T-cell (primary cell): ENCODE measurements at regions of chr19 and their contacts with region 1.

Region 1: DNA sequence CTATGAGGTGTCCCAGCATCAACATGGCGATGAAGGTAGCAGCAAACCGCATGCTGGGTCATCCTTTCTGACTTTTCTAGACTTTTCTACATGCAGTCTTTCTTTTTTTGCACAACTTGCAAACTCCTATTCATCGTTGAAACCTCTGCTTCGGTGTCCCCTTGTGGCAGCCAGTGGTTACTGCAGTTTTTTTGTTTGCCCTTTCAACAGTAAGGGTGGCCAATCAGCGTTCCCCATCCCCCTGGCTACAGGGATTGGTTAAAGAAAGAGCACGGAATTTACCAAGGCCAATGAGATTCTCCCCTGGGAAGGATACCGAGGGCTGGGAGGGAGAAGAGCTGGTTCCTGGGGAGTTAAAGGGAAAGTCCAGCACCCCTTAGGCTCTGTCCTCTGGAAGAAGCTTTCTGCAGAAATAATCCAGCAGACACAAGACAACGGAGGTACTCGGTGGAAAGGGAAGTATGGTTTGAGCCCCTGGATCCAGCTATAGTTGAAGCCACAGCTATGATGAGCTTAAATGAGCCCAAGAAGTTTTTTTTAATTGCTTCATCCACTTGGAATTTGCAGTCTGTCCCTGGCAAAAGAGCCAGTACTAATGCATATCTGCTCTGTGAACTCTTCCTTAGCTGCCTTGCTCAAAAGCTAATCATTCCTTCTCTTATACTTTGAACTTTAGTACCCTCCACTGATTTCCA is 5.6 kb upstream of the LSM4 start:
- DNase-seq: peak; percentile 66 to 92 (median 83)
- ATAC-seq: peak; percentile 99
- H3K4me3 ChIP-seq: peak overlapping the region; percentile 36 to 49
- H3K4me3 Mint-ChIP-seq: peak overlapping the region; percentile 15 to 59 (median 55)
- H3K27ac ChIP-seq: peak overlapping the region; percentile 16
- H3K27ac Mint-ChIP-seq: peak overlapping the region; percentile 3 to 68
- H3K4me1 ChIP-seq: peaks cover 14 to 21% of the 10 kb centered on the region in 2 experiments
- H3K4me1 Mint-ChIP-seq: peaks cover 18 to 19% (median 18%) of the 10 kb centered on the region in 3 donors
- H3K27me3 ChIP-seq: peaks cover 0 to 12% of the 10 kb centered on the region in 2 experiments
- H3K27me3 Mint-ChIP-seq: no peaks in the 10 kb centered on the region

Region 2: GRCh38 chr19:18251587-18252369 is 76.7 kb before region 1 on chr19:
- CTCF ChIA-PET with region 1: interaction called, 6 to 10 read pairs
- POLR2A ChIA-PET with region 1: no interaction called
- DNase-seq: peak; percentile 41 to 90 (median 74)
- ATAC-seq: peak; percentile 72 to 86 (median 83)
- H3K4me3 ChIP-seq: no peak overlapping the region
- H3K4me3 Mint-ChIP-seq: no peak overlapping the region
- H3K27ac ChIP-seq: no peak overlapping the region
- H3K27ac Mint-ChIP-seq: no peak overlapping the region
- H3K4me1 ChIP-seq: peaks cover 0 to 5% of the 10 kb centered on the region in 2 experiments
- H3K4me1 Mint-ChIP-seq: peaks cover 3 to 13% (median 4%) of the 10 kb centered on the region in 3 donors
- H3K27me3 ChIP-seq: peaks cover 0 to 57% of the 10 kb centered on the region in 2 experiments
- H3K27me3 Mint-ChIP-seq: peaks cover 26 to 30% of the 10 kb centered on the region in 2 donors

Region 3: GRCh38 chr19:18269070-18269723 is 59.3 kb before region 1 on chr19:
- CTCF ChIA-PET with region 1: interaction called in 1 of 2 experiments, 15 read pairs
- POLR2A ChIA-PET with region 1: interaction called, 7 to 10 read pairs
- DNase-seq: peak in 1 of 35 experiments; percentile 7
- ATAC-seq: no peak
- H3K4me3 ChIP-seq: no peak overlapping the region
- H3K4me3 Mint-ChIP-seq: peak overlapping the region in 1 of 3 donors; percentile 5
- H3K27ac ChIP-seq: no peak overlapping the region
- H3K27ac Mint-ChIP-seq: no peak overlapping the region
- H3K4me1 ChIP-seq: peaks cover 0 to 23% of the 10 kb centered on the region in 2 experiments
- H3K4me1 Mint-ChIP-seq: peaks cover 7 to 21% (median 9%) of the 10 kb centered on the region in 3 donors
- H3K27me3 ChIP-seq: no peaks in the 10 kb centered on the region
- H3K27me3 Mint-ChIP-seq: no peaks in the 10 kb centered on the region

Region 4: DNA sequence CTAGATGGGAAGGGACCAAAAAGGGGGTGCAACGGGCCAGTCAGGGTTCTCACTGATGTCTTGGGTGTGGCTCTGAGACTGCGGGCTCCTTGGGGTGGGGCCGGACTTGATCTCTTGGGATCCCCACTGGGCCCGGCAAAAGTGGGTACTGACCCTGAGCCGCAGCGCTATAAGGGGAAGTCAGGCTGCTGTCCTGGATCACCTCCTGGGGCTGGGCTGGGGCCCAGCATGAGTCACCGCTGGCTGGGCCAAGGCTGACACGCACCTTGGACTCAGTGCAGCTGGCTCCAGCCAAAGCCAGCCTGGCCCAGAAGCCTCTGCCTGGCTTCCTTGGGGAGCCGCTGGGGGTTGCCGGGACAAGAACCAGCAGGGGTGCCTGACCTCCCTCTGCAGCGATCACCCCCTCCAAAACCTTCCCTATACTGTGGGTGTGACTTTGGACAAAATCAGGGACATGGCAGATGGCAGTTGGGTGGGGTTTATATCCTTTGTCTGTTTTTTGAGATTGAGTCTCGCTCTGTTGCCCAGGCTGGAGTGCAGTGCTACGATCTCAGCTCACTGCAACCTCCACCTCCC is 53.6 kb before region 1 on chr19:
- CTCF ChIA-PET with region 1: interaction called, 5 to 35 read pairs
- POLR2A ChIA-PET with region 1: interaction called, 10 to 37 read pairs
- DNase-seq: peak in 4 of 35 experiments; percentile 19 to 52 (median 33)
- ATAC-seq: peak in 1 of 4 experiments; percentile 3
- H3K4me3 ChIP-seq: no peak overlapping the region
- H3K4me3 Mint-ChIP-seq: peak overlapping the region in 1 of 3 donors; percentile 37
- H3K27ac ChIP-seq: no peak overlapping the region
- H3K27ac Mint-ChIP-seq: peak overlapping the region; percentile 55 to 61
- H3K4me1 ChIP-seq: peaks cover 18 to 48% of the 10 kb centered on the region in 2 experiments
- H3K4me1 Mint-ChIP-seq: peaks cover 40 to 53% (median 40%) of the 10 kb centered on the region in 3 donors
- H3K27me3 ChIP-seq: no peaks in the 10 kb centered on the region
- H3K27me3 Mint-ChIP-seq: no peaks in the 10 kb centered on the region